ENCODE measurements at regions of chr3 and their contacts with region 1.

Region 1: DNA sequence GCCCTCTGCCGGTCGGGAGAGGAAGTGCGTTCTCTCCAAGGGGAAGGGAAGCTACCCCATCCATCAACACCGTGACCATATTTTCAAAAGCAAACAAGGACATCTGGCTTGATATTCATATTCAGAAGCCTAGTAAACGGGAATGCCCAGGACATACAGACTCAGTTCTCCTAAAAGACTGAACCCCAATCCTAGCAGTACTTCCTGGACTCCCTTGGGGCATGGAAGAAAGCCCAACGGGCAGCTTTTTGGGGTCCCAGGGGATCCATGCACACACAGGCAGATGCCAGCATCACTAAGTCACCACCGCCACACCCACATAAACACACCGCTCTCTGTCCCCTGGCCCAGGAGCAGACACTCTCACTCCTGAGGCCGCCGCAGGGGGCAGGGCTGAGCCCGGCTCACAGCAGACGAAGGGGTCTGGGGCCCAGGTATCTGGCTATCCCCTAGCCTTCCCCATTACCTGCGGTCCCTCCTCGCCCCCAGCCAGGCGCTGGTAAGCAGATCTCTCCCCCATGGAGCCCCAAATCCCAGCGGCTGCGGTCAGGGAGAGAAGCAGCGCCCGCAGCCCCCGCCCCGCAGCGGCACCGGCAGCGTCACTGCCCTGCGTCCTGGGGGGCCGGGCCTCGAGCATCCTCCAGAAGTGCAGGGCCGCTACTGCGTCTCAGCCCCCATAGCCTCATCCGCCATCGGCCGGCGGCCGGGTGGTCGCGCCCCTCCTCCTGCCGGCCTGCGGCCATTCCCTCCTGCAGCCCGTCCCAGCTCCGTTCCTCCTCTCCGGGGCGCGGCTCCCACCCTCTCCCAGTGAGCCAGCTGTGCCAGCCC is 13.4 kb downstream of the TNK2 start:
- DNase-seq: peak in 1 of 2 experiments; percentile 75
- H3K4me3 ChIP-seq: peak overlapping the region; percentile 35 to 95 (median 70)
- H3K27ac ChIP-seq: no peak overlapping the region
- H3K4me1 ChIP-seq: peaks cover 0 to 28% (median 17%) of the 10 kb centered on the region in 4 experiments; a peak in 6 of 7 replicates
- H3K27me3 ChIP-seq: no peaks in the 10 kb centered on the region
- CTCF ChIP-seq: peak in 2 of 3 experiments; percentile 93 to 94; a peak in 3 of 4 replicates
- EP300 ChIP-seq: no peak
- POLR2A ChIP-seq: 0 out of 3 replicates have a peak, but pooled peaks of 1 of the 2 experiments have one; percentile 26
- RAD21 ChIP-seq: peak; percentile 89 to 93; a peak in 2 of 4 replicates

Region 2: GRCh38 chr3:195876297-195877031 is 18.5 kb before region 1 on chr3:
- CTCF ChIA-PET with region 1: interaction called, 95 read pairs
- POLR2A ChIA-PET with region 1: interaction called, 5 read pairs
- DNase-seq: no peak
- H3K4me3 ChIP-seq: no peak overlapping the region
- H3K27ac ChIP-seq: no peak overlapping the region; the same call in 1 of the 2 replicates
- H3K4me1 ChIP-seq: no peaks in the 10 kb centered on the region; a peak in 1 of 7 replicates
- H3K27me3 ChIP-seq: no peaks in the 10 kb centered on the region
- CTCF ChIP-seq: no peak
- EP300 ChIP-seq: no peak
- POLR2A ChIP-seq: no peak
- RAD21 ChIP-seq: no peak

Region 3: DNA sequence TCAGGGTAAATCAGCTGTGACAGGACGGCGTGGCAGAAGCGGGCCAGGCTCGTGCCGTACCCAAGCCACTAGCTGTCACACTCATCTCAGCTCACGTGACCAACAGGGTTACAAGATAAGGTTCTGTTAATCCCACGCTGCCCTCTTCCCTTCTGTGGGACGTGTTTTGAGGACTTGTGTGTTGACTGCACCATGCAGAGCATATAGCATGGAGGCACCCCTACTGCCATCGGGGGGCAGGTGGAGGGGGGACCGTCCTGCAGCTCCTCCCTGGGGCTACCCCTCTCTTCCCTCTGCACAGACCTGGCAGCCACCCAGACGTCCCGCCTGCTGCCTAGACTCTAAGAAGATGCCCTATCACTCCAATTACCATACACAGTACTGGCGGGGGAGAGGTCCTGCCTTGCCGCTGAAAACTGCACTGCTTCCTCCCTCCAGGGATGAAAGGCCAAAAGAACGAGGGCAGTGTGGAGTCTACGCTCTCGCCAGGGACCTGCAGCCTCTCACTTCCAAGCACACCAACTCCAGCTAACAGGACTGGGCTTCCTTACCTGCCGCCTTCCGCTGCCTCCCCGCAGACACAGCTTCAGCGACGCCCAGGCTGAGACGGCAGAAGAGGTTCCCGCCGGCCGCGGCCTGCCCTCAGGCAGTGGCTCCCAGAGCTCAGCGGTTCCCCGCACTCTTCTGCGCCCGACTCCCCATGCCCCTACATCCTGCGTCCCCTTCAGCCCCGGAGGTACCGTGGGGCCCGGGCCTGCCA is 13.1 kb after region 1 on chr3 and contains the start of gene TNK2:
- CTCF ChIA-PET with region 1: interaction called, 59 read pairs
- POLR2A ChIA-PET with region 1: interaction called, 10 read pairs
- DNase-seq: peak in 1 of 2 experiments; percentile 75
- H3K4me3 ChIP-seq: peak within 1 kb of the TSS; percentile 69 to 79 (median 74)
- H3K27ac ChIP-seq: no peak within 1 kb of the TSS
- H3K4me1 ChIP-seq: peaks cover 7 to 20% (median 16%) of the 10 kb centered on the region in 4 experiments; a peak in 6 of 7 replicates
- H3K27me3 ChIP-seq: peaks cover 0 to 15% (median 5%) of the 10 kb centered on the region in 4 experiments; a peak in 5 of 7 replicates
- CTCF ChIP-seq: no peak
- EP300 ChIP-seq: no peak
- POLR2A ChIP-seq: no peak
- RAD21 ChIP-seq: no peak
- total RNA-seq, gene TNK2: 33.9 and 38.6 TPM in 2 replicates

Region 4: GRCh38 chr3:195914648-195915473 is 19.9 kb after region 1 on chr3:
- CTCF ChIA-PET with region 1: interaction called, 59 read pairs
- POLR2A ChIA-PET with region 1: interaction called, 7 read pairs
- DNase-seq: peak; percentile 97
- H3K4me3 ChIP-seq: peak overlapping the region in 2 of 4 experiments; percentile 14 to 31; a peak in 2 of 8 replicates
- H3K27ac ChIP-seq: peak overlapping the region; percentile 57
- H3K4me1 ChIP-seq: peaks cover 7 to 13% (median 11%) of the 10 kb centered on the region in 4 experiments
- H3K27me3 ChIP-seq: peaks cover 0 to 6% (median 4%) of the 10 kb centered on the region in 4 experiments; a peak in 4 of 7 replicates
- CTCF ChIP-seq: peak in 2 of 3 experiments; percentile 93 to 99; a peak in 3 of 4 replicates
- EP300 ChIP-seq: no peak
- POLR2A ChIP-seq: peak in 1 of 2 experiments; percentile 70; a peak in 1 of 3 replicates
- RAD21 ChIP-seq: peak; percentile 80 to 88

Measured in H1 (cell line).